ENCODE measurements at regions of chrX and their contacts with region 1.

Region 1: DNA sequence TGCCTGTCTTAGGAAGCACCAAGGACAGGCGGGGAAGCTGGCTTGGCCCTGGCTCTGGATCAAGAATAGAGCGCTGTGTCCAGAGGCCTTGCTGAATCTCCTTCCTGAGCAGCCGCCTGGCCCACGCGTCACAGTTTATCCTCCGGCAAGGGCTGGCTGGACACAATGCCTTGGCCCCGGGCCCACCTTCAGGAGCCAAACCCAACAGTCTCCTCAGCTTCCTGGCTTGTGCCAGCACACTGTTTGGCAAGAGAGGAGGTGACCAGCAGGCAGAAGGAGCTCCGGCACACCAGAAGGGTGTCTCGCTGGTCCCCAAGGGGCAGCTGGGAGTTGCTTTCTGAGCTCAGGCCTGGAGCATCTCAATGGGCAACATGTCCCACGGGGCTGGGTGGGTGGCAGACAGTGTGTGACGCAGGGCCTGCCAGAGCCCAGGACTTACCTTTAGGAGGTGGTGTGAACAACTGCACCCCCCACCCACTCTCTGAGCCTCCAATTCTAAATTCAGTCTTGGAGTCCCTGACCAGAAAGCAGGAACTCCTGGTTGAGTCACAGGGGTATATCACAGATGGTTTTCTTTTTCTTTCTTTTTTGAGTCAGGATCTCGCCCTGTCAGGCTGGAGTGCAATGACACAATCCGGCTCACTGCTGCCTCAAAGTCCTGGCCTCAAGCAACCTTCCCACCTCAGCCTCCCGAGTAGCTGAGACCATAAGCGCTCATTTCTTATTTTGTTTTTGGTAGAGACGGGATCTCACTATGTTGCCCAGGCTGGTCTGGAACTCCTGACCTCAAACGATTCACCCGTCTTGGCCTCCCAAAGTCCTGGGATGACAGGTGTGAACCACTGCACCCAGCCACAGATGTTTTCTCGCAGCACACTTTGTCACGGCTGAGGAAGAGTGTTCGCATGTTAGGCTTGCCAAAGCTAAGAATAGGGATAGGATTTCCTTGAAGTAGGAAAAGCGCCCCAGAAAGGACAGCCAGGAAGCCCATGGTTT is 361.2 kb downstream of the BCOR start:
- DNase-seq: peak; percentile 83
- H3K4me3 ChIP-seq: no peak overlapping the region
- H3K27ac ChIP-seq: peak overlapping the region in 1 of 2 donors; percentile 41
- H3K4me1 ChIP-seq: peaks cover 5% of the 10 kb centered on the region
- H3K27me3 ChIP-seq: no peaks in the 10 kb centered on the region
- CTCF ChIP-seq: peak in 1 of 4 experiments; percentile 4
- POLR2A ChIP-seq: no peak

Region 2: DNA sequence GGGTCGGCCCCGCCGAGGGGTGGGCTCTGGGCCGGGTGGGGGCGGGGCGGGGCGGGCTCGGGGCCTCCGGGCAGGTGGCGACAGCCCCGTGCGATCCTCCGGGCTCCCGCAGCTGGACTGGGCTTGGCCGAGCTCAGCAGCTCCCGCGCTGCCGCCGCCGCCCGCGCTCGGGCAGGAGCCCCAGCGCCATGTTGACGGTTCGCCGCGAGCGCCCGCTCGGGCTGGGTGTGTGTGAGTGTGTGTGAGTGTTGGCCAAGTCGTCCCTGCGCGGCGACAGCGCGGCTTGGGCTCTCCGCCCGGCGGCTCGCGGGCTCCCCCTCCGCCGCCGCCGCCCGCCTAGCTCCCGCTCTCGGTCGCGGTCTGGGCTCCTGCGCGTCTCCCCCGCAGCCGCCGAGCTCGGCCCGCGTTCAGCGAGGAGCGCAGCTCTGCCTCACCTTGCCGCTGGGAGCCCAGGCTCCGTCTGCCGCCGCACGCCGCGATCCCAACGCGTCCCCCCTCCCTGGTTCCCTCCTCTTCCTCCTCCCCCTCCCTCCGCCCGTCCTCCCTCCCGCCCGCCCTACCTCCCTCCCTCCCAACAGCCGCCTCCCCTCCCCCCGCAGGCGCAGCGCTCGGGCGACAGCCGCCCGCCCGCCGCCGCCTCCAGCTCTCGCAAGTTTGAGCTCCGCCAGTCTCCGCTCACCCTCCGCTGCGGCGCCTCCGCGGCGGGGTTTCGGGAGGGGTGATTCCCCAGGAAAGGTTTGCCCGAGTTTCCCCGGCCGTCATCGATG is 361.2 kb after region 1 on chrX and contains the start of gene BCOR:
- intact Hi-C with region 1: loop called (anchors 5 kb)
- DNase-seq: peak; percentile 65
- H3K4me3 ChIP-seq: peak within 1 kb of the TSS; percentile 63 to 65
- H3K27ac ChIP-seq: peak within 1 kb of the TSS; percentile 86 to 92
- H3K4me1 ChIP-seq: no peaks in the 10 kb centered on the region
- H3K27me3 ChIP-seq: no peaks in the 10 kb centered on the region
- CTCF ChIP-seq: no peak
- POLR2A ChIP-seq: peak; percentile 79
- total RNA-seq, gene BCOR: 56.2 to 70.8 TPM

Measured in prostate gland (tissue), 2 donors.